ENCODE measurements at regions of chr3 and their contacts with region 1.

Region 1: GRCh38 chr3:58025837-58026569 is 17.8 kb downstream of the FLNB start:
- DNase-seq: peak; percentile 51
- H3K4me3 ChIP-seq: no peak overlapping the region
- H3K27ac ChIP-seq: no peak overlapping the region
- H3K4me1 ChIP-seq: peaks cover 0 to 25% (median 9%) of the 10 kb centered on the region in 6 donors
- H3K27me3 ChIP-seq: no peaks in the 10 kb centered on the region
- CTCF ChIP-seq: no peak
- POLR2A ChIP-seq: no peak

Region 2: GRCh38 chr3:58073301-58074108 is 47.5 kb after region 1 on chr3:
- intact Hi-C with region 1: loop called (anchors 10 kb)
- DNase-seq: no peak
- H3K4me3 ChIP-seq: no peak overlapping the region
- H3K27ac ChIP-seq: peak overlapping the region in 4 of 8 donors; percentile 24 to 45 (median 27)
- H3K4me1 ChIP-seq: peaks cover 10 to 44% (median 27%) of the 10 kb centered on the region in 6 donors
- H3K27me3 ChIP-seq: no peaks in the 10 kb centered on the region
- CTCF ChIP-seq: no peak
- POLR2A ChIP-seq: no peak